H1 (cell line): ENCODE measurements at regions of chr20 and their contacts with region 1.

Region 1: DNA sequence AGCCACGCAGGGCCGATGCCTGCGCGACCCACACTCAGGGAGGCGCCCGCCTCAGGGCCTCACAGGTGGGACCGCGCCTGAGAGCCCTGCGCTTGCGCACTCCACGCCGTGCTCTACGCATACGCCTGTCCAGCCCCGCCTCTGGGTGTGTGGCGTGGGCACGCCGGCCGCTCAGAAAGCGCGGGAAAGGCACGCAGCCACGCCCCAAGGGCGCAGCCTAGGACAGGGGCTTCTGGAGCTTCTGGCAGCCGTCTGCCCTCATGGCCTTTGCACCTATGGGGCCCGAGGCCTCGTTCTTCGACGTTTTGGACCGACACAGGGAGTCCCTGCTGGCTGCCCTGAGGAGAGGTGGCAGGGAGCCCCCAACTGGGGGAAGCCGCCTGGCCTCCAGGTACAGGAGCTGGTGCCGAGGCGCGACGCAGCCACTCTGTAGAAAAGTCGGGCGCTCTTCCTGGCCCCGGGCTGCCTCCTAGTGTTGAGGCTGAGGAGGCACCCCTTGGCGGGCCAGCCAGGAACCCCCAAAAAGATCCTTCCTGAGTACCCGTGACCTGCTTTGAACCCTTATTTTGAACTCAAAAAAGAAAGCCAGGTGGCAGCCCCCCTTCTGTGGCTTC is at the start of gene SPO11:
- DNase-seq: peak; percentile 38 to 78
- H3K4me3 ChIP-seq: no peak within 1 kb of the TSS
- H3K27ac ChIP-seq: no peak within 1 kb of the TSS
- H3K4me1 ChIP-seq: peaks cover 0 to 7% (median 2%) of the 10 kb centered on the region in 4 experiments; a peak in 1 of 7 replicates
- H3K27me3 ChIP-seq: peaks cover 0 to 3% (median 0%) of the 10 kb centered on the region in 4 experiments; a peak in 2 of 7 replicates
- CTCF ChIP-seq: peak; percentile 74 to 90 (median 81)
- EP300 ChIP-seq: no peak
- POLR2A ChIP-seq: no peak
- RAD21 ChIP-seq: peak; percentile 89 to 92
- total RNA-seq, gene SPO11: not detected in 2 replicates

Region 2: GRCh38 chr20:57089691-57090150 is 240.0 kb before region 1 on chr20:
- CTCF ChIA-PET with region 1: interaction called, 150 read pairs
- POLR2A ChIA-PET with region 1: no interaction called
- DNase-seq: peak; percentile 43 to 97
- H3K4me3 ChIP-seq: no peak overlapping the region
- H3K27ac ChIP-seq: no peak overlapping the region
- H3K4me1 ChIP-seq: peaks cover 0 to 6% (median 4%) of the 10 kb centered on the region in 4 experiments; a peak in 4 of 7 replicates
- H3K27me3 ChIP-seq: peaks cover 0 to 14% (median 7%) of the 10 kb centered on the region in 4 experiments; a peak in 5 of 7 replicates
- CTCF ChIP-seq: peak; percentile 86 to 97 (median 88)
- EP300 ChIP-seq: no peak
- POLR2A ChIP-seq: no peak
- RAD21 ChIP-seq: peak; percentile 96 to 98

Region 3: DNA sequence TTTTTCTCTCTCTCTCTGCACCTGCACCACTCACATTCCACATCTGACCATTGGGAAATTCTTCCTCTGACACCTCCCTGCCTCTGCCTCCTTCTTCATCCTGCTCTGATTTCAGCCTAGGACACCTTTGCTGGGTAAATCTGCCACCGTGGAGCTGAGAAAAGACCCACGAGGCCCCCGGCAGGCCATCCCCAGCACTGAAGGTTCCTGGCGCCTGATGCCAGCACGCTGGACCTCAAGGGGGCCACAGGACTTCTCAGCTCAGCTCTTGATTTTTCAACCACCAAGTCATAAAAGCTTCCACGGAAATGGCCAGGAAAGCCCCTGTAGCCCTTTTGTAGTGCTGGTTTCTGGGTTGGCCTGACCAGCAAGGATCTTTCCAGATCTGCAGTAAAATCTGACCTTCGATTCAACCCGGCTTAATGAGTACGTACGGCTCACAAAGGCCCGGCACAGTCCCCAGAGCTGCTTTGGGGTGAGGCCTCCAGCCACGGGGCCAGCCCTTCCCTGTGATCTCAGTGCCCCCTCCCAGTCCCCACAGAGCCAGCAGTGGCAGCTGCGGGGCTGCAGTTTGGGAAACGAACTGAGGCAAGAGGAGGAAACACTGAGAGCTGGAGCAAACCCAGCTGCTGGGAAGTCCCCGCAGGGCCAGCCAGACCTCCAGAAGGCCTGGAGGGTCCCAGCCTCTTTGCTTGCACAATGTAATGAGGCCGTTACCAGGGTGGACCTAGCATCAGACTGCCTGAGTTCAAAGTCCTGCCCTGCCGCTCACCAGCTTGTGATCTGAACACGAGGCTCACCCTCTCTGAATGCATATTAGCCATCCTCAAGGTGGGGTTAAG is 220.8 kb before region 1 on chr20:
- CTCF ChIA-PET with region 1: interaction called, 16 read pairs
- POLR2A ChIA-PET with region 1: no interaction called
- DNase-seq: peak in 1 of 2 experiments; percentile 54
- H3K4me3 ChIP-seq: no peak overlapping the region
- H3K27ac ChIP-seq: no peak overlapping the region
- H3K4me1 ChIP-seq: peaks cover 0 to 2% (median 0%) of the 10 kb centered on the region in 4 experiments; a peak in 2 of 7 replicates
- H3K27me3 ChIP-seq: no peaks in the 10 kb centered on the region
- CTCF ChIP-seq: peak; percentile 37 to 59 (median 40)
- EP300 ChIP-seq: no peak
- POLR2A ChIP-seq: no peak
- RAD21 ChIP-seq: peak; percentile 31 to 39; a peak in 3 of 4 replicates

Region 4: GRCh38 chr20:57179265-57179664 is 150.4 kb before region 1 on chr20:
- CTCF ChIA-PET with region 1: interaction called, 35 read pairs
- POLR2A ChIA-PET with region 1: no interaction called
- DNase-seq: no peak
- H3K4me3 ChIP-seq: no peak overlapping the region
- H3K27ac ChIP-seq: no peak overlapping the region
- H3K4me1 ChIP-seq: peaks cover 0 to 16% (median 1%) of the 10 kb centered on the region in 4 experiments; a peak in 6 of 7 replicates
- H3K27me3 ChIP-seq: no peaks in the 10 kb centered on the region
- CTCF ChIP-seq: no peak
- EP300 ChIP-seq: no peak
- POLR2A ChIP-seq: no peak
- RAD21 ChIP-seq: no peak

Region 5: GRCh38 chr20:57244627-57245214 is 85.0 kb before region 1 on chr20:
- CTCF ChIA-PET with region 1: interaction called, 23 read pairs
- POLR2A ChIA-PET with region 1: no interaction called
- DNase-seq: peak in 1 of 2 experiments; percentile 57
- H3K4me3 ChIP-seq: no peak overlapping the region
- H3K27ac ChIP-seq: no peak overlapping the region
- H3K4me1 ChIP-seq: peaks cover 0 to 8% (median 2%) of the 10 kb centered on the region in 4 experiments; a peak in 3 of 7 replicates
- H3K27me3 ChIP-seq: no peaks in the 10 kb centered on the region
- CTCF ChIP-seq: peak; percentile 42 to 66 (median 57)
- EP300 ChIP-seq: no peak
- POLR2A ChIP-seq: no peak
- RAD21 ChIP-seq: peak; percentile 63 to 71; a peak in 3 of 4 replicates

Region 6: DNA sequence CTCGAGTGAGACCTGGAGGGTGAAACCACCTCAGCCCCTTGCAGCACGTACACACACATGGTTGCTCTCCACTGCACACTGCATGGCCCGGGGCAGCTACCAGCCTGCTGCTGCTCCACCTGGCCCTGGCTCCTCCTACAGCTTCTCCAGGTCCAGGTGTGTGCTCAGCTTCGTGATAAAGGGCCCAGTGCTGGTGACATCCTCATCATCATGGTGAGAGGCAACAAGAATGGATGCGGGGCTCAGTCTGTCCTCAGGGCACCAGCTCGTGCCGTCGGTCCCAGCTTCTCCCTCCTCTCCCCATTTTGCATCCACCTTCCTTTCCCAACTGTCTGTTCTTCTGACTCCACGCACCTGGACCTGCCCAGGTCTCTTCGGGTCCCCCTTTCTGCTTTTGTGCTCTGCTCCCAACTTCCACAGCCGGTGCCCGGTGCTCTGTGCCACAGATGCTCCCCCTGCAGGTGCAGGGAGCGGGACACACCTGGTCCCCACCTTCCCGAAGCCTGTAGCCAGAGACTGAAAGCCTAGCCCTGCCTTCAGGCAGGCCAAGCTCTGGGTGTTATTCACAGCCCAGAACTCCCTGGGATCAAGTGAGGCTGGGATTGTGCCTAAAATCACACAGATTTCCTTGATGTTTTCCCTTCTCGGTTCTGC is 38.8 kb before region 1 on chr20:
- CTCF ChIA-PET with region 1: interaction called, 18 read pairs
- POLR2A ChIA-PET with region 1: no interaction called
- DNase-seq: peak; percentile 19 to 71
- H3K4me3 ChIP-seq: no peak overlapping the region
- H3K27ac ChIP-seq: no peak overlapping the region
- H3K4me1 ChIP-seq: peaks cover 0 to 14% (median 3%) of the 10 kb centered on the region in 4 experiments; a peak in 4 of 7 replicates
- H3K27me3 ChIP-seq: no peaks in the 10 kb centered on the region; a peak in 1 of 7 replicates
- CTCF ChIP-seq: peak; percentile 69 to 77 (median 71)
- EP300 ChIP-seq: no peak
- POLR2A ChIP-seq: no peak
- RAD21 ChIP-seq: peak; percentile 55 to 72

Region 7: DNA sequence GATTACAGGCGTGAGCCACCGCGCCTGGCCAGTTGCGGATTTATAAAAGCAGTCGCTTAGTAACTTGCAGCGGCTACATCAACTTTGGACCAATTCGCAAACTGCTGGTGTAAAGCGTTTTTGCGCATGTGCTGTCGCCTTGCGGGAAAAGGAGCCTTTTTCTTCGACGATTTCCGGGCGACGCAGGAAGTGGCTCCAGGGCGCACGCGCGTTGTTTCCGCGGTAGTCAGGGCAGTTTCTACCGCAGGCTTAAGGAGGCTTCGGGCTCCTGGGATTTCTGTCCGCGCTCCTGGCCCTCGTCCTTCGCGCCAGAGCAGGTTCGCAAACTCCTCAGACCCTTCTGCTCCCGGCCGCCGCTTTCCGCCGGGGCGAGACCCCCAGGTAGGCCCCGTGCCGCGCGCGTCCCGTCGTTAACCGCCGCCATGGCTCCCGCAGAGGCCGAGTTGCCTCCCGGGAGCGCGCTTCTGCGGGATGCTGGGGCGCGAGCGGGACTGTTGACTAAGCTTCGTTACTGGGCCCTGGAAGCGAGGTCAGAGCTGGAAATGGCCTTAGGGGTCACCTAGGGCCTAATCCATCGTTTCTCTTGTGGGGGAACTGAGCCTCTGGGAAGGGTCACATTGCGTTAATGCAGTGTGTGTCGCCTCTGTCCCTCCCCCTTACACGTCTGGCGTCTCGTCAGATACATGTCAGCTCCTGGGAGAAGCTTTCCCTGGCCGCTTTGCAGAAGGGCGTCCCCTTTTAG is 21.5 kb after region 1 on chr20 and contains the start of gene RAE1:
- CTCF ChIA-PET with region 1: interaction called, 52 read pairs
- POLR2A ChIA-PET with region 1: no interaction called
- DNase-seq: peak; percentile 38 to 90
- H3K4me3 ChIP-seq: peak within 1 kb of the TSS; percentile 94 to 99 (median 98)
- H3K27ac ChIP-seq: peak within 1 kb of the TSS; percentile 86
- H3K4me1 ChIP-seq: peaks cover 0 to 9% (median 4%) of the 10 kb centered on the region in 4 experiments; a peak in 5 of 7 replicates
- H3K27me3 ChIP-seq: no peaks in the 10 kb centered on the region
- CTCF ChIP-seq: no peak
- EP300 ChIP-seq: no peak
- POLR2A ChIP-seq: peak; percentile 53 to 87
- RAD21 ChIP-seq: no peak
- total RNA-seq, gene RAE1: 33.0 and 35.9 TPM in 2 replicates

Region 8: GRCh38 chr20:57369596-57370325 is 40.0 kb after region 1 on chr20:
- CTCF ChIA-PET with region 1: no interaction called
- POLR2A ChIA-PET with region 1: no interaction called
- DNase-seq: no peak
- H3K4me3 ChIP-seq: no peak overlapping the region
- H3K27ac ChIP-seq: no peak overlapping the region
- H3K4me1 ChIP-seq: peaks cover 0 to 8% (median 3%) of the 10 kb centered on the region in 4 experiments; a peak in 3 of 7 replicates
- H3K27me3 ChIP-seq: no peaks in the 10 kb centered on the region; a peak in 1 of 7 replicates
- CTCF ChIP-seq: no peak
- EP300 ChIP-seq: no peak
- POLR2A ChIP-seq: no peak
- RAD21 ChIP-seq: no peak